PC-9 (cell line): ENCODE measurements at regions of chr1 and their contacts with region 1.

Region 1: DNA sequence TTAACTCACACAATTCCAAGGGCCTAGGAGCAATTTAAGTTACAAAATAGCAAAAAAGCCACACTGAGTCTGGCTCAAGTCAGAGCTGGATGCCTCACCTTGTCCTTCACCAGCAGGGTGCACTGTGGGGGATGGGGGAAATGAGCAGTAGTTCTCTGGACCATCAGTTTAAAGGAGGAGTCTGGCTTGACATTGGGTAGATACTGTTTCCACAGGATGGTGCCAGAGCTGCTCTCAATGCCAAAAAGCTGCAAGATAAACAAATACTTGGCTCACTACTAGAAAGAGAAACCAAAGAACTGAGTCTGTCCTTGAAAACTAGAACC is 18.8 kb downstream of the EMC1 start:
- DNase-seq: no peak
- H3K4me3 ChIP-seq: no peak overlapping the region
- H3K27ac ChIP-seq: no peak overlapping the region
- H3K4me1 ChIP-seq: no peaks in the 10 kb centered on the region
- H3K27me3 ChIP-seq: no peaks in the 10 kb centered on the region
- CTCF ChIP-seq: no peak

Region 2: GRCh38 chr1:19204446-19205266 is 27.8 kb before region 1 on chr1:
- CTCF ChIA-PET with region 1: no interaction called
- POLR2A ChIA-PET with region 1: interaction called, 10 read pairs
- intact Hi-C with region 1: no loop called
- DNase-seq: no peak
- H3K4me3 ChIP-seq: no peak overlapping the region
- H3K27ac ChIP-seq: no peak overlapping the region
- H3K4me1 ChIP-seq: peaks cover 3% of the 10 kb centered on the region; the same call in 1 of the 2 replicates
- H3K27me3 ChIP-seq: no peaks in the 10 kb centered on the region
- CTCF ChIP-seq: no peak

Region 3: GRCh38 chr1:19289244-19289643 is 56.8 kb after region 1 on chr1:
- CTCF ChIA-PET with region 1: no interaction called
- POLR2A ChIA-PET with region 1: interaction called, 15 read pairs
- intact Hi-C with region 1: no loop called
- DNase-seq: no peak
- H3K4me3 ChIP-seq: no peak overlapping the region
- H3K27ac ChIP-seq: no peak overlapping the region
- H3K4me1 ChIP-seq: no peaks in the 10 kb centered on the region
- H3K27me3 ChIP-seq: no peaks in the 10 kb centered on the region
- CTCF ChIP-seq: no peak